Endothelial cell of umbilical vein (primary cell): ENCODE measurements at regions of chr15 and their contacts with region 1.

Region 1: DNA sequence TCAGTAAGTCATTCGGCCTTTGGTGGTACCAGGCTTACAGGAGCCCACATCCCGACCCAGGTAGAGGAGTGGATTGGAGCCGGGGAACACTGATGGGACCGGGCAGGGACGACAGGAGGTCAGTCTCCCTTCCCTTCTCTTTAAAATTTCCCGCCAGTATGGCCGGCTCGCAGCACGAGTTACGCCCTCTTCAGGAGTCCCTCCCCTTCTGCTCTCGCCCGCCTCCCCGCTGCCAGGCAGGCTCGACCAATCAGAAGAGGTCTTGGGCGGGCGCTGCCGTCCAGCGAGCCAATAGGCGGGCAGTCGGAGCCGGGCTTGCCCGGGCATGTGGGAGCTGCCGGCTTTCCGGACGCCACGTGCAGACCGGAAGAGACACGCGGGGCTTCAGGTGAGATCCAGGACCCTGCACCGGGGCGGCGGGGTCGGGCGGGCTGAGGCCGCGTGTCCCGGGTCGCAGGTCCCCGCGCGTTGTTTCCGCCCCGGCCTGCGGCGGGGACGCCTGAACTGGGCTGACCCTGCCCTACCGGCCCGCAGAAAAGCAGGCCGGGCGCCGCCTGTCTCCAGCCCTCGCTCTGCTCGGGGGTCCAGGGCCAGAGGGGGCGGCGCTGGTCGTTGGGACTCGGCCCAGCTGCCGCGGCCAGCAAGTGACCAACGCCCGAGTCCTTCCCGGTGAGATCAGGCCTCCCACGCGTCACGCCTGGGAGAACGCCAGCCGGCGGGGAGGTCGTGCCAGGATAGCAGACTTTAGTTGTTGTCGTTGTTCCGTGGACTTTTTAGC is at the start of gene AEN:
- DNase-seq: peak; percentile 98
- H3K4me3 ChIP-seq: peak within 1 kb of the TSS; percentile 33 to 78 (median 70)
- H3K27ac ChIP-seq: peak within 1 kb of the TSS; percentile 81
- H3K4me1 ChIP-seq: peaks cover 31% of the 10 kb centered on the region
- H3K27me3 ChIP-seq: no peaks in the 10 kb centered on the region
- CTCF ChIP-seq: no peak
- POLR2A ChIP-seq: peak; percentile 72
- total RNA-seq, gene AEN: 35.6 and 38.3 TPM in 2 replicates

Region 2: DNA sequence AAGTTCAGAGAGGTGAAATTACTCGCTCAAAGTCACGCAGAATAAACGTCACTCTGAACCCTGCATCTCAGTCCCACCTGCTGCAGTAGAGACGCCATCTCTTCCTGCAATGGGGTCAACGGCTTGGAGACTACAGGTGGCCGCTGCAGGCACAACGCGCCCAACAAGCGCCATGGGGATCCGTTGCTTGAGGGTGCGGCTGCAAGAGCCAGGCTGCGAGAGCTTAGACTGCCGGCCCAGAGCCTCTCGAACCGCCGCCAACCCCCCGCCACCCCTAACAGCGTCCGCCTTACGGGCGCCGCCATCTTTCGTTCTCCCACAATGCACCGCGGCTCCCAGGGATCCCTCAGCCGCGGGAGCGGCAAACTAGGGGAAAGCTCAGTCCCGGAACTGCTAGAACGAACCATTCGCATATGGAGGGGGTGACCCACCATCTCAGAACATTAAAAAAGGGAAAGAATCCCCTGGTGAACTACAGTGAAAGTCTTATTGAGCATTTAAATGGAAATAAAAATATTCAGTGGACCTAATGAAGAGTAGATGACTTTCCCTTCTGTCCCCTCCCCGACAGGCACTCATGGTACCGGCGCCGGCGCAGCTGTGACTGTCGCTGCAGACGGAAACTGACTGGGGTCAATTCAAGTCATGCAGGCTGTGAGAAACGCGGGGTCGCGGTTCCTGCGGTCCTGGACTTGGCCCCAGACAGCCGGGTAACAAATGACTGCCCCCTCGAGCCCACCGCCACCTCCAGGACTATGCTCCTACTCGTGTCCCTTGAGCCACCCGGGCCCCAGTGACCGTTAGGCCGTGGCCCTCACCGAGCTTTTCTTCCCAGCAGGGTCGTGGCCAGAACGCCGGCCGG is 153.9 kb before region 1 on chr15 and contains the starts of genes MRPL46 and MRPS11:
- CTCF ChIA-PET with region 1: interaction called, 7 read pairs
- POLR2A ChIA-PET with region 1: no interaction called
- dilution Hi-C with region 1: no loop called
- intact Hi-C with region 1: loop called (anchors 5 kb)
- DNase-seq: peak; percentile 92
- H3K4me3 ChIP-seq: peak within 1 kb of the TSS; percentile 76 to 99 (median 84)
- H3K27ac ChIP-seq: peak within 1 kb of the TSS; percentile 96
- H3K4me1 ChIP-seq: peaks cover 37% of the 10 kb centered on the region
- H3K27me3 ChIP-seq: no peaks in the 10 kb centered on the region
- CTCF ChIP-seq: no peak
- POLR2A ChIP-seq: peak; percentile 87
- total RNA-seq, gene MRPL46: 27.9 and 30.9 TPM in 2 replicates
- total RNA-seq, gene MRPS11: 66.3 and 71.7 TPM in 2 replicates

Region 3: GRCh38 chr15:88604381-88605188 is 16.6 kb before region 1 on chr15:
- CTCF ChIA-PET with region 1: no interaction called
- POLR2A ChIA-PET with region 1: no interaction called
- dilution Hi-C with region 1: no loop called
- intact Hi-C with region 1: no loop called
- DNase-seq: no peak
- H3K4me3 ChIP-seq: no peak overlapping the region
- H3K27ac ChIP-seq: no peak overlapping the region
- H3K4me1 ChIP-seq: no peaks in the 10 kb centered on the region
- H3K27me3 ChIP-seq: peaks cover 44 to 53% of the 10 kb centered on the region in 2 experiments
- CTCF ChIP-seq: no peak
- POLR2A ChIP-seq: no peak

Region 4: GRCh38 chr15:88649286-88649733 is 28.1 kb after region 1 on chr15:
- CTCF ChIA-PET with region 1: interaction called, 12 read pairs
- POLR2A ChIA-PET with region 1: no interaction called
- dilution Hi-C with region 1: no loop called
- intact Hi-C with region 1: loop called (anchors 1 kb)
- DNase-seq: peak; percentile 95
- H3K4me3 ChIP-seq: no peak overlapping the region
- H3K27ac ChIP-seq: peak overlapping the region; percentile 99
- H3K4me1 ChIP-seq: peaks cover 35% of the 10 kb centered on the region
- H3K27me3 ChIP-seq: no peaks in the 10 kb centered on the region
- CTCF ChIP-seq: no peak
- POLR2A ChIP-seq: no peak

Region 5: GRCh38 chr15:88701561-88702095 is 80.4 kb after region 1 on chr15:
- CTCF ChIA-PET with region 1: no interaction called
- POLR2A ChIA-PET with region 1: no interaction called
- dilution Hi-C with region 1: no loop called
- intact Hi-C with region 1: loop called (anchors 1 kb)
- DNase-seq: no peak
- H3K4me3 ChIP-seq: no peak overlapping the region
- H3K27ac ChIP-seq: no peak overlapping the region
- H3K4me1 ChIP-seq: no peaks in the 10 kb centered on the region
- H3K27me3 ChIP-seq: peaks cover 6 to 21% of the 10 kb centered on the region in 2 experiments
- CTCF ChIP-seq: peak in 1 of 2 donors; percentile 17
- POLR2A ChIP-seq: no peak

Region 6: GRCh38 chr15:88859550-88859949 is 238.4 kb after region 1 on chr15:
- CTCF ChIA-PET with region 1: no interaction called
- POLR2A ChIA-PET with region 1: no interaction called
- dilution Hi-C with region 1: no loop called
- intact Hi-C with region 1: no loop called
- DNase-seq: no peak
- H3K4me3 ChIP-seq: no peak overlapping the region
- H3K27ac ChIP-seq: no peak overlapping the region
- H3K4me1 ChIP-seq: peaks cover 6% of the 10 kb centered on the region
- H3K27me3 ChIP-seq: no peaks in the 10 kb centered on the region
- CTCF ChIP-seq: no peak
- POLR2A ChIP-seq: no peak

Region 7: GRCh38 chr15:88878720-88879184 is 257.6 kb after region 1 on chr15:
- CTCF ChIA-PET with region 1: interaction called, 14 read pairs
- POLR2A ChIA-PET with region 1: no interaction called
- dilution Hi-C with region 1: no loop called
- intact Hi-C with region 1: loop called (anchors 1 kb)
- DNase-seq: peak; percentile 39
- H3K4me3 ChIP-seq: no peak overlapping the region
- H3K27ac ChIP-seq: no peak overlapping the region
- H3K4me1 ChIP-seq: no peaks in the 10 kb centered on the region
- H3K27me3 ChIP-seq: no peaks in the 10 kb centered on the region
- CTCF ChIP-seq: peak; percentile 72 to 87
- POLR2A ChIP-seq: no peak

Region 8: DNA sequence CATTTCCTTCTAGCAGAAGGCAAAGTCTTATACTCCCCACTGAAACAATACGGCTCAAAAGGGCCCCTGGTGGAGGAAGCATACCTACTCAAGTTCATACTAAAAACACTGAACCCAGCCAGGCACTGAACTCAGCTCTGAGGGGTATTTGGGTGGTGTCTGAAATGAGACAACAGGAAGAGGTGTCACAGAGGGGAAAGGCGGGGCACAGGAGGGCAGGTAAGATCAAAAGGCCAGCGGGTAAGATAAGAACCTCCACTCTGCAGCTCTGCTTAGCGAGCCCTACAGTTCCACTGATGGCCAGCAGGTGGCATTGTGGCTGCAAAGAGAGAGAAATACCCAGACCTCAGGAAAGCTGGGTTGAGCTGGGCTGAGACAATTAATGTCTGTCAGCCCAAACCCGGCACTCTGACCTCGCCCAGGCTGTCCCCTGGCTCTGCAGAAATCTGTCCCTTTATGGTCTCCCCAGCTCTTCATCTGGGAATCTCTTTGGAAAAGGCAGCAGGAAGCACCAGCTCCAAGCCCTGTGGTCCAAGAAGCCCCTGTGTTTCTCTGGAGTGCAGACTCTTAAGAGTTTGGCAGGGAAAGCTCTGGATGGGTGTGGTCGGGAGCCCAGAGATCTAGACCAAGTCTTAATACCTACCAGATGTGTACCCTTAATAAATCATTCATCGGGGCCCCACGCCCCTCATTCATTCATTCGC is 283.6 kb after region 1 on chr15:
- CTCF ChIA-PET with region 1: interaction called, 11 read pairs
- POLR2A ChIA-PET with region 1: no interaction called
- dilution Hi-C with region 1: no loop called
- intact Hi-C with region 1: no loop called
- DNase-seq: peak; percentile 78
- H3K4me3 ChIP-seq: no peak overlapping the region
- H3K27ac ChIP-seq: no peak overlapping the region
- H3K4me1 ChIP-seq: no peaks in the 10 kb centered on the region
- H3K27me3 ChIP-seq: no peaks in the 10 kb centered on the region
- CTCF ChIP-seq: peak; percentile 97 to 98
- POLR2A ChIP-seq: no peak

Region 9: GRCh38 chr15:89334510-89335288 is 713.5 kb after region 1 on chr15 and contains the start of gene POLG:
- CTCF ChIA-PET with region 1: no interaction called
- POLR2A ChIA-PET with region 1: no interaction called
- dilution Hi-C with region 1: no loop called
- intact Hi-C with region 1: loop called (anchors 10 kb)
- DNase-seq: peak; percentile 99
- H3K4me3 ChIP-seq: peak within 1 kb of the TSS; percentile 40 to 91 (median 71)
- H3K27ac ChIP-seq: peak within 1 kb of the TSS; percentile 11
- H3K4me1 ChIP-seq: peaks cover 28% of the 10 kb centered on the region
- H3K27me3 ChIP-seq: peaks cover 0 to 6% of the 10 kb centered on the region in 2 experiments
- CTCF ChIP-seq: no peak
- POLR2A ChIP-seq: peak; percentile 96
- total RNA-seq, gene POLG: 77.7 and 79.4 TPM in 2 replicates